ENCODE measurements at regions of chr4 and their contacts with region 1.

Region 1: DNA sequence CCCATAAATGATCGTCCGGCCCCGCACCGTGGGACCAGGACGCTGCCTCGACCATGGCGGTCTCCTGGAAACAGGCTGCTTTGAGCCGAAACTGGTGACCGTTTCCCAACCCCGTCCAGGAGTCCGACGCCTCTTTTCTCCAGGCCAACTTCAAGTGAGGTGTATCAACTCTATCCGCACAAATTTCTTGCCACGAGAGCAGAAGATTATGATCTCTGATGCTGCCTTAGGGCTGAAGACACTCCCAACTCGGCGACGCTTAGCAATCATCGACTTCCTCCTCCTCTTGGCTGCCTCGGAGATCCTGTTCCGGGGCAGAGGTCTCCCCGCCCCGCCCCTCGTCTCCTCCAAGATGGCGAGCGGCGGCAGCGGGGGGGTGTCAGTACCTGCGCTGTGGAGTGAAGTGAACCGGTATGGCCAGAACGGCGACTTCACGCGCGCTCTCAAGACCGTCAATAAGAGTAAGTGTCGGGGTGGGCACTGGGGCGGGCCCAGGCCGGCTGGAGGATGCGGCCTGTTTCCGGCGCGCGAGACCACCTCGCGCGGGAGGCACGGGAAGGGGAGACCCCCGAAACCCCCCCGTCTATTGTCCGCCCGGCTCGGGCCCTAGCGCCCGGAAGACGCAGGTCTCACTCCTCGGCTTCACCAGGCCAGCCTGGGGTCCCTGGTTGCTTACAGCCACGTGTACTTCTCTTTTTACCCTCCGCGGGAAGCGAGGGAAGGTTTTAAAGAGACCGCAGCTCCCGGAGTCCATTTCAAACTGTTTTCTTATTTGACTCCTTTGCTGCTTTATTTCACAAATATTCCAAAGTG is at the start of gene SRP72:
- DNase-seq: peak; percentile 79 to 81
- ATAC-seq: peak; percentile 97
- H3K4me3 ChIP-seq: peak within 1 kb of the TSS; percentile 91 to 100 (median 100)
- H3K27ac ChIP-seq: peak within 1 kb of the TSS; percentile 93 to 97 (median 95)
- H3K4me1 ChIP-seq: peaks cover 38 to 41% of the 10 kb centered on the region in 2 donors
- H3K27me3 ChIP-seq: no peaks in the 10 kb centered on the region
- CTCF ChIP-seq: no peak
- POLR2A ChIP-seq: peak; percentile 35 to 62
- total RNA-seq, gene SRP72: 35.8 to 70.4 (median 53.1) TPM

Region 2: GRCh38 chr4:56200275-56200674 is 267.2 kb before region 1 on chr4:
- in situ Hi-C with region 1: no loop called
- intact Hi-C with region 1: no loop called
- DNase-seq: no peak
- ATAC-seq: no peak
- H3K4me3 ChIP-seq: no peak overlapping the region
- H3K27ac ChIP-seq: no peak overlapping the region
- H3K4me1 ChIP-seq: no peaks in the 10 kb centered on the region
- H3K27me3 ChIP-seq: no peaks in the 10 kb centered on the region
- CTCF ChIP-seq: no peak
- POLR2A ChIP-seq: no peak

Region 3: DNA sequence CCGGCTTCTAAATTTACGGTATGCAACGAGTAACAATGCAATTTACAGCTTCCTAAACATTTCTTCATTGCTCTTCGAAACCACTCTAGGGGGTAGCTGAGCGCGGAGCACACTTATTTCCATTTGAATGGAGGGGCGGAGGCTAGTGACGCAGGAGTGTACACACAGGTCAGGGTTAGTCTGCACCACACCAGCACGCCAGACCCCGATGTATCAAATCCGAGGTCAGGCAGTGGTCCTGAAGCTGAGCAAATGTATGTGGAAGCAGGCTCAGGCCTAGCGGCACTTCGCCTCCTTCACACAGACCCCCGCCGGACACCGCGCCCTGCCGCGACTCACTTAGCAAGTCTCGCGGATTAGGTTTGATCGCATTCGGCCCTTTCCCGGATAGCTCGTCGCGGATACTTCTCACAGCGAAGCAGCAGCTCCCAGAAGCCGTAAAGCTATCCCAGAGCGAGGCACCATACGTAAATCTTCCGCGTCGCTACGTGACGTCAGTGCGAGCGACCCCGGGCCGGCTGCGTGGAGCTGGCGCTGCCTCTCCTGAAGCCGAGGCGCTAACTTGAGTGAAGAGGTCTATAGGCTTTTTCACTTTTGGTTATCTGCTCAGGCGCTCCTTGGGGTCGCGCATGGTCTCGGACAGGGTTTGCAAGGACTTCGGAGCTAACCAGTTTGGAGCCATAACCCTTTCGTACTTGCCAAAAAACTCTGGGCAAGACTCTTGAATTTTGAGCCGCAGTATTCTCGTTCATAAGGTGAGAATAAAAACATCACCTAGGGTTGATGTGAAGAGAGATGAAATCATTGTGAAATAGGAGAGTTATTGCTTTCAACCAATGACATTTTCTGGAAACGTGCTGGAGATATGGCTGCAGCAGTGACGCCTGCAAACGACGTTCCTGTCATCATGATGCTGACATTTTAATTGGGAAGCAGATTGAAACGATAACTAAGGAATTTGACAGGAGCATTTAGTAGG is 80.2 kb before region 1 on chr4 and contains the start of gene AASDH:
- in situ Hi-C with region 1: no loop called
- intact Hi-C with region 1: loop called (anchors 1 kb)
- DNase-seq: peak; percentile 78 to 86
- ATAC-seq: peak; percentile 96 to 97
- H3K4me3 ChIP-seq: peak within 1 kb of the TSS; percentile 72 to 98 (median 78)
- H3K27ac ChIP-seq: peak within 1 kb of the TSS; percentile 90 to 98 (median 92)
- H3K4me1 ChIP-seq: peaks cover 20 to 26% of the 10 kb centered on the region in 2 donors
- H3K27me3 ChIP-seq: no peaks in the 10 kb centered on the region
- CTCF ChIP-seq: peak in 1 of 5 experiments; percentile 32
- POLR2A ChIP-seq: peak; percentile 50 to 62
- total RNA-seq, gene AASDH: 2.6 to 4.2 (median 3.3) TPM

Region 4: DNA sequence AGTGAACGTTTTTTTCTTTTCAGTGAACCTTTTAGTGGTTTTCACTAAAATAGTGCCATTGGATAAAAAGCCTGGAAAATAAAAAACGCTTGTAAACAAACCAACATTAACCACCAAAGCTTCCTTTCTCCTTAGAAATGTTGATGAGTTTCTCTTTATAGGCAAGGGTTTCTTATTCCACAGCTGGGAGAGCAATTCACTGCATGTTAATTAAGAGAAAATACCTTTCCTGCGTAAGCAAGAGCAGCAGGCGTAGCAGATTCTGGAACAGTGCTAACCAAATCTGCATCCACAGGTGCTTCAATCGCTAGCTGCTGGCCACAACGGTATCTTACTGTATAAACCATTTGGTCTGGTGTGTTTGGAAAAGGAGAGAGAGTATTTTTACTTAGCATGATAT is 66.9 kb before region 1 on chr4:
- in situ Hi-C with region 1: no loop called
- intact Hi-C with region 1: no loop called
- DNase-seq: no peak
- ATAC-seq: no peak
- H3K4me3 ChIP-seq: no peak overlapping the region
- H3K27ac ChIP-seq: no peak overlapping the region
- H3K4me1 ChIP-seq: no peaks in the 10 kb centered on the region
- H3K27me3 ChIP-seq: no peaks in the 10 kb centered on the region
- CTCF ChIP-seq: no peak
- POLR2A ChIP-seq: no peak

Region 5: DNA sequence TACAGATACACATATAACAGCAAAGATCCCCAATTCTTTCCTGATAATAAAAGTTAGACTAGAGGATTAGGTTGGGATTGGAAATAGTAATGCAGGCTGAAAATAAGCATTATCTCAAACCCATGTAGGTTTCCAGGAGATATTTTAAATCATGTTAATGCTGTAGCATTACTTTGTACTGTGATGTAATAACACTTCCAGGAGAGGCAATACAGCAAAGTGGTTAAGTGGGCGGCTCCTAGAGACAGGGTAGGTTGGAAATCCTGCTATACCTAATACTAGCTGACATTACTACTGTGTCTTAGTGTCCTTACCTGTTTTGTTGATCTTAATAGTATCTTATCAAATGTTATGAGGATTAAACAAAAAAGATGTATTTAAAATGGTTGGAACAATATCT is 21.8 kb before region 1 on chr4:
- in situ Hi-C with region 1: no loop called
- intact Hi-C with region 1: loop called (anchors 2 kb)
- DNase-seq: no peak
- ATAC-seq: no peak
- H3K4me3 ChIP-seq: no peak overlapping the region
- H3K27ac ChIP-seq: no peak overlapping the region
- H3K4me1 ChIP-seq: no peaks in the 10 kb centered on the region
- H3K27me3 ChIP-seq: no peaks in the 10 kb centered on the region
- CTCF ChIP-seq: no peak
- POLR2A ChIP-seq: no peak

Region 6: DNA sequence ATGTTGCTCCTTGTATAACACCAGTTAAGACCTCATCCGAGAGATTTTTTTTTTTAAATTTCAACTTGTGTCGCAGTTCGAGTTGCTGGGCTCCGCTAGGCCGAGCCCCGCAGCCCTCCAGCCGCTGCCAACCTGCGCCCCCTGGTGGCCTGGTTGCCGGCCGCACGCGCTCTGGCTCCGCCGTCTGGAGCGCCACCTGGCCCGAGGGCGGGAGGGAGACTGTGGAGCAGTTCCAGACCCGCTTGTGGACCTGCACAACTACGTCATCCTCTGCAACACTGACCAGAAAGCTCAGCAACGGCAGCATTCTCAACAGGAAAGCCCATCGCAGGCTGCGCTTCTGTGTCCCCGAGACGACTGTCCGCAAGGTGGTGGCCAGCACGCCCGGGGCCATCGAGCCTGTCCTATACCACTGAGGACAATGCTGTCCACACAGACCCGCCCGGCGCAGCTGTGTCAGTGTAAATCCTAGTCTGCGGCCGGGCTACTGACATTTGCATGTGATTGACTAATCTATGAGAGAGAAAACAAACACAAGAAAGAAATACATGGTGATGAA is 77.2 kb after region 1 on chr4:
- in situ Hi-C with region 1: no loop called
- intact Hi-C with region 1: loop called (anchors 10 kb)
- DNase-seq: peak; percentile 52 to 56
- ATAC-seq: peak; percentile 96 to 97
- H3K4me3 ChIP-seq: peak overlapping the region; percentile 34 to 53 (median 48)
- H3K27ac ChIP-seq: no peak overlapping the region
- H3K4me1 ChIP-seq: peaks cover 0 to 4% of the 10 kb centered on the region in 2 donors
- H3K27me3 ChIP-seq: no peaks in the 10 kb centered on the region
- CTCF ChIP-seq: peak; percentile 82 to 98 (median 90)
- POLR2A ChIP-seq: no peak

Region 7: GRCh38 chr4:56977321-56978012 is 510.0 kb after region 1 on chr4 and contains the start of gene NOA1:
- in situ Hi-C with region 1: loop called in 1 of 4 experiments (anchors 25 kb)
- intact Hi-C with region 1: no loop called
- DNase-seq: peak; percentile 96 to 98
- ATAC-seq: peak; percentile 87 to 93
- H3K4me3 ChIP-seq: peak within 1 kb of the TSS; percentile 81 to 95 (median 90)
- H3K27ac ChIP-seq: peak within 1 kb of the TSS; percentile 81 to 94 (median 91)
- H3K4me1 ChIP-seq: peaks cover 41 to 53% of the 10 kb centered on the region in 2 donors
- H3K27me3 ChIP-seq: no peaks in the 10 kb centered on the region
- CTCF ChIP-seq: peak in 1 of 5 experiments; percentile 1
- POLR2A ChIP-seq: peak; percentile 67 to 73
- total RNA-seq, gene NOA1: 20.3 to 34.5 (median 23.2) TPM

Region 8: GRCh38 chr4:58149404-58150085 is 1682.1 kb after region 1 on chr4:
- in situ Hi-C with region 1: no loop called
- intact Hi-C with region 1: no loop called
- DNase-seq: no peak
- ATAC-seq: no peak
- H3K4me3 ChIP-seq: no peak overlapping the region
- H3K27ac ChIP-seq: no peak overlapping the region
- H3K4me1 ChIP-seq: no peaks in the 10 kb centered on the region
- H3K27me3 ChIP-seq: no peaks in the 10 kb centered on the region
- CTCF ChIP-seq: no peak
- POLR2A ChIP-seq: no peak

Measured in gastrocnemius medialis (tissue), 4 donors.